Cardiac septum (tissue), 1 donor: ENCODE measurements at regions of chr16 and their contacts with region 1.

Region 1: GRCh38 chr16:2883027-2883851 is at the start of gene FLYWCH2:
- DNase-seq: peak; percentile 100
- total RNA-seq, gene FLYWCH2: 20.8 TPM

Region 2: DNA sequence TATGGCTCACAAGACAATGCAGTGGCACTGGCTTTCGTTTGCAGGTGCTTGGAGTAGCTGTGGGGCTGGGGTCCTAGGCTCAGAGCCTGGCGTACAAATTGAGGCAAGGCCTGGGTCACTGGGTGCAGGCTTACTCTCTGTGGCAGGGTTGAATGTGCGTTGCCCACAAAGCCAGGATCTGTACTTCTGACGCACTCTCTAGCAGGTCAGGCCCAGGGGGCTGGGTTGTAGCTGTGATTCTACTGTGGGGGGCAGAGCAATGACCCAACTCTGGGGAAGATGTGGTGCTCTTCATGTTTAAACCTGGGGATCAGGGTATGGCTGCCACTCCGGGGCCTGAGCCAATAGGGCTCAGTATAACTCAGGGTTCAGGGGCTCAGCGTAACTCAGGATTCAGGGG is 72.6 kb before region 1 on chr16:
- intact Hi-C with region 1: no loop called
- DNase-seq: no peak

Region 3: GRCh38 chr16:2905431-2906387 is 22.5 kb after region 1 on chr16:
- intact Hi-C with region 1: loop called (anchors 2 kb)
- DNase-seq: peak; percentile 99

Region 4: DNA sequence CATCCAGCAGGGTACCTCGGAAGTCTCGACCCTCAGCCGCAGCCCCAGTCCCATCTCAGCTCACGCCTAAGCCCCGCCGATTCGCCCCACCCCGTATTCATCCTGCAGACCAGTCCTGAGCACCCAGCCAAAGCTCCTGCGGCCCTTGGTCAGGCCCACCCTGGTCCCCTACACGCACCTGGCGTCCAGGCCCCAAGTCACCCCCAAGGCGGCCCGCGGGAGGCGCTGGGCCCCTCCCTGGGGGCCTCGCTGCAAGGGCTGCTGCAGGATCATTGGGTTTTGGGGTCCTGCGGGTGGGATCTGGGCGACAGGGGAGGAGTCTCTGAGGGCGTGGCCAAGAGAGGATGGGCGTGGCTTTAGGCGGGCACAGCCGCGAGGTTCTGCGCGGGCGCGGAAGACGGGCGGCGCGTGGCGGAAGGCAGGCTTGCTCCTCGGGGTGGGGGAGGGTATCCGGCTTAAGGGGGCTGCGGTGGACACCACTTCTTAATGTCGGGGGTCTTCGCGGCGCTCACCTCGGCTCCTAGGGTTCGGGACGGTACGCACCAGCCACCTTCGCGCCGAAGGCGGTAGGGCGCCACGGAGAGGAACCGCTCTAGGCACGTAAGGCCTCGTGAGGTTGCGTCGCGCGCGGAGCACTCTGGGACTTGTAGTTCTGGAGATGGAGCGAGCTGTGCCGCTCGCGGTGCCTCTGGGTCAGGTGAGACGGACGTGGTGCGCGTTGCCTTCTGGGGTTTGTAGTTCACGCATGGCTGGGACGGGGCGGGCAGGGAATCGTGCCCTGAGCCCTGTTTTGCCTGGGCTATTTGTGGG is 140.6 kb after region 1 on chr16 and contains the starts of genes HCFC1R1 and THOC6:
- intact Hi-C with region 1: no loop called
- DNase-seq: peak; percentile 99
- total RNA-seq, gene HCFC1R1: 41.3 TPM
- total RNA-seq, gene THOC6: 13.9 TPM